ENCODE measurements at regions of chr5 and their contacts with region 1.

Region 1: GRCh38 chr5:23742701-23743100 is 235.3 kb downstream of the PRDM9 start:
- DNase-seq: no peak
- H3K4me3 ChIP-seq: no peak overlapping the region
- H3K27ac ChIP-seq: no peak overlapping the region
- H3K4me1 ChIP-seq: no peaks in the 10 kb centered on the region
- H3K27me3 ChIP-seq: no peaks in the 10 kb centered on the region
- CTCF ChIP-seq: peak; percentile 10 to 45

Region 2: GRCh38 chr5:23332650-23333251 is 409.9 kb before region 1 on chr5:
- CTCF ChIA-PET with region 1: no interaction called
- dilution Hi-C with region 1: no loop called
- in situ Hi-C with region 1: no loop called
- intact Hi-C with region 1: loop called (anchors 5 kb)
- DNase-seq: peak; percentile 24
- H3K4me3 ChIP-seq: no peak overlapping the region
- H3K27ac ChIP-seq: no peak overlapping the region
- H3K4me1 ChIP-seq: no peaks in the 10 kb centered on the region
- H3K27me3 ChIP-seq: no peaks in the 10 kb centered on the region
- CTCF ChIP-seq: peak; percentile 58 to 65

Region 3: DNA sequence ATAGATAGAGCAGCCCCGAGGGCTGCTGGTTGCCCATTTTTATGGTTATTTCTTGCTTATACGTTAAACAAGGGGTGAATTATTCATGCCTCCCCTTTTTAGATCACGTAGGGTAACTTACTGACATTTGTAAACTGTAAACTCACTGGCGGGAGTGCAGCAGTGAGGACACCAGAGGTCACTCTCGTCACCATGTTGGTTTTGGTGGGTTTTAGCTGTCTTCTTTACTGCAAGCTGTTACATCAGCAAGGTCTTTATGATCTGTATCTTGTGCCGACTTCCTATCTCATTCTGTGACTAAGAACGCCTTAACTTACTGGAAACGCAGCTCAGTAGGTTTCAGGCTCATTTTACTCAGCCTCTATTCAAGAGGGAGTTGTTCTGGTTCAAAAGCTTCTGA is 390.3 kb before region 1 on chr5:
- CTCF ChIA-PET with region 1: no interaction called
- dilution Hi-C with region 1: no loop called
- in situ Hi-C with region 1: no loop called
- intact Hi-C with region 1: loop called (anchors 1 kb)
- DNase-seq: peak; percentile 5
- H3K4me3 ChIP-seq: no peak overlapping the region
- H3K27ac ChIP-seq: no peak overlapping the region
- H3K4me1 ChIP-seq: no peaks in the 10 kb centered on the region
- H3K27me3 ChIP-seq: no peaks in the 10 kb centered on the region
- CTCF ChIP-seq: peak; percentile 32 to 50

Region 4: GRCh38 chr5:23614422-23614821 is 128.3 kb before region 1 on chr5:
- CTCF ChIA-PET with region 1: interaction called, 3 read pairs
- dilution Hi-C with region 1: no loop called
- in situ Hi-C with region 1: no loop called
- intact Hi-C with region 1: loop called (anchors 1 kb)
- DNase-seq: no peak
- H3K4me3 ChIP-seq: no peak overlapping the region
- H3K27ac ChIP-seq: no peak overlapping the region
- H3K4me1 ChIP-seq: no peaks in the 10 kb centered on the region
- H3K27me3 ChIP-seq: no peaks in the 10 kb centered on the region
- CTCF ChIP-seq: peak; percentile 22 to 40

Region 5: GRCh38 chr5:23763170-23763569 is 20.5 kb after region 1 on chr5:
- CTCF ChIA-PET with region 1: no interaction called
- dilution Hi-C with region 1: no loop called
- in situ Hi-C with region 1: no loop called
- intact Hi-C with region 1: no loop called
- DNase-seq: no peak
- H3K4me3 ChIP-seq: no peak overlapping the region
- H3K27ac ChIP-seq: no peak overlapping the region
- H3K4me1 ChIP-seq: no peaks in the 10 kb centered on the region
- H3K27me3 ChIP-seq: no peaks in the 10 kb centered on the region
- CTCF ChIP-seq: no peak

Region 6: GRCh38 chr5:23776684-23777083 is 34.0 kb after region 1 on chr5:
- CTCF ChIA-PET with region 1: no interaction called
- dilution Hi-C with region 1: no loop called
- in situ Hi-C with region 1: no loop called
- intact Hi-C with region 1: no loop called
- DNase-seq: no peak
- H3K4me3 ChIP-seq: no peak overlapping the region
- H3K27ac ChIP-seq: no peak overlapping the region
- H3K4me1 ChIP-seq: no peaks in the 10 kb centered on the region
- H3K27me3 ChIP-seq: no peaks in the 10 kb centered on the region
- CTCF ChIP-seq: no peak